Dendritic cell treated with granulocyte-macrophage colony-stimulating factor and Interleukin-4, amounts not matched to agents 40 ng/mL and 50 ng/mL, for 4 days (primary cell): ENCODE measurements at regions of chr3 and their contacts with region 1.

Region 1: GRCh38 chr3:52001443-52001974 is 5.8 kb upstream of the RPL29 start:
- H3K4me3 Mint-ChIP-seq: no peak overlapping the region
- H3K27ac Mint-ChIP-seq: no peak overlapping the region
- H3K4me1 Mint-ChIP-seq: peaks cover 23% of the 10 kb centered on the region
- H3K27me3 Mint-ChIP-seq: peaks cover 15% of the 10 kb centered on the region

Region 2: DNA sequence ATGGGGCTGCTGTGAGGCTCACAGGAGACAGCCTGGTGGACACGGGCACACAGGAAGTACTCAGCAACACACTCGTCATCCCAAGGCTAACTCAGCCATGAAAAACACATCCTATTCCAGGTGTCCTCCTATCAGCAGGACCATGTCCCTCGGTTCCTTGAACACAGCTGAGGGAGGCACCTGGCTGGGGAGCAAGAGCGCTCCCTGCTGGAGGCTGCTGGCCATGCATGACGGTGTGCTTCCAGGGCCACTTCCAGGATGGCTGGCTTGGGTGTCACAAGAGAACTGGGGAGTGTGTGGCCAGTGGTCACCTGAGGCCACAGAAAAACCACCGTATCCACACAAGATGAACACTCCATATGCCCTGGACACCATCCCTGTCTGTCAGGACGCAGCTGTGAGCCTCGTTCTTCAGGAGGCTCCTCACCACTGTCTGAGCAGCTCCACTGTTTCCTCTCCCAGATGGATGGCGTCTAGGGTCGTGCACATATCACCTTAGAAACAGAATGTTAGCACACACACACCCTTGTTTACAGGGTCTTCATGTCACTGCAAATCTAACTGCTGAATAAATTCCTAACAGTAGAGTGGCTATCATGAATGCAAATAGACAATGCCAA is 121.7 kb after region 1 on chr3:
- intact Hi-C with region 1: loop called (anchors 2 kb)
- H3K4me3 Mint-ChIP-seq: no peak overlapping the region
- H3K27ac Mint-ChIP-seq: peak overlapping the region; percentile 92
- H3K4me1 Mint-ChIP-seq: peaks cover 64% of the 10 kb centered on the region
- H3K27me3 Mint-ChIP-seq: no peaks in the 10 kb centered on the region

Region 3: DNA sequence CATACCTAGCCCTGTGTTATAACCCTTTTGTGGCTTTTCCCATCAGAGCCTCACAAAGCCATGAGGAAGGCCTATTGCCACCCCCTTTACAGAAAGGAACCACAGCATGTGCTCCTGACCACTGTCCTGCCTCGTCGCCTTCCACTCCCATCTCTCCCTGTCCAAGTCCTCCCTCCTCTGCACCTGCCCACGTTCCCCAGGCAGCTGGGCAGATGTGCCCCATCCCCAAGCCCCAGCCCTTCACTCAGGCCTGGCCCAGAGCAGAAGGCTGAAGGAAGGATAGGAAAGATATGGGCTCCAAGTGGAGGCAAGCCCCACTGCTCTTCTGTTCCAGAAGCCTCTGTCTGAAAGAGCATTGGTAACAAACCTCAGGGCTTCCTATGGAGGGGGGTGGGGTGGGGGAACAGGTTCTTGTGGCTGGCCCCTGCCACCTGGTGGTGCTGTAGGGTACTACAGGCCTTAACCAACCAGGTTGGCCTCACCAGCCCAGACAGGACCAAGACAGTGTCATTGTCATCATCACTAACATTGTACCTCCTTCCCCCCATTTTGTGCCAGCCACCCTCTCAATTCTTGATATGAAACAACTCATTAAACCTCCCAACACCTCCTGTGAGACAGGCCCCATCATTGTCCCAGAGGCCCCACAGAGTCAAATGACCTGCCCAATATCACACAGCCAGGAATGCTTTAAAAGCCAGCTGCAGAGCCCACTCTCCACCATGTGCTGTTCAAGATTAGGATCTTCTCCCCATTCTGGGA is 142.7 kb after region 1 on chr3:
- intact Hi-C with region 1: loop called (anchors 1 kb)
- H3K4me3 Mint-ChIP-seq: no peak overlapping the region
- H3K27ac Mint-ChIP-seq: peak overlapping the region; percentile 31
- H3K4me1 Mint-ChIP-seq: peaks cover 5% of the 10 kb centered on the region
- H3K27me3 Mint-ChIP-seq: no peaks in the 10 kb centered on the region